CD4-positive, alpha-beta memory T cell (primary cell): ENCODE measurements at regions of chr13 and their contacts with region 1.

Region 1: GRCh38 chr13:55543053-55543452 is 1597.7 kb upstream of the PRR20A start:
- DNase-seq: no peak
- H3K4me3 ChIP-seq: no peak overlapping the region
- H3K4me3 Mint-ChIP-seq: no peak overlapping the region
- H3K27ac ChIP-seq: no peak overlapping the region
- H3K27ac Mint-ChIP-seq: no peak overlapping the region
- H3K4me1 ChIP-seq: no peaks in the 10 kb centered on the region
- H3K4me1 Mint-ChIP-seq: no peaks in the 10 kb centered on the region
- H3K27me3 ChIP-seq: no peaks in the 10 kb centered on the region
- H3K27me3 Mint-ChIP-seq: no peaks in the 10 kb centered on the region

Region 2: DNA sequence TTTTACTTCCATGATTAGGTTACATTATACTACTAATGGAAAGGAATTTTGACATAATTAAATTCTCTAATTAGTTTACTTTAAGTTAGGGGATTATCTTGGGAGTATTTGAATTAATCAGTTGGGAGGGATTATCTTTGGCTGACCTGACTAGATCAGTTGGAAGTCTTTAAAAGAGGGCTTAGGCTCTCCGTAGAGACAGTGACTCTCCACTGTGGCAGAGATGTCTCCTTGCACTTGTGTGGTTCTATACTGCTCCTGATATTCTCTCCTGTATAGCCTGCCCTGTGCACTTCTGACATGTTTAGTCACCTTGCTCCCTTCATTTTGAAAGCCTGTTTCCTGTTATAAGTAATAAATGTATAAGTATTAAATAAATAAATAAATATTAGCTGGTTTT is 14.6 kb before region 1 on chr13:
- CTCF ChIA-PET with region 1: no interaction called
- POLR2A ChIA-PET with region 1: no interaction called
- intact Hi-C with region 1: no loop called
- DNase-seq: no peak
- H3K4me3 ChIP-seq: no peak overlapping the region
- H3K4me3 Mint-ChIP-seq: no peak overlapping the region
- H3K27ac ChIP-seq: no peak overlapping the region
- H3K27ac Mint-ChIP-seq: no peak overlapping the region
- H3K4me1 ChIP-seq: no peaks in the 10 kb centered on the region
- H3K4me1 Mint-ChIP-seq: no peaks in the 10 kb centered on the region
- H3K27me3 ChIP-seq: no peaks in the 10 kb centered on the region
- H3K27me3 Mint-ChIP-seq: no peaks in the 10 kb centered on the region

Region 3: DNA sequence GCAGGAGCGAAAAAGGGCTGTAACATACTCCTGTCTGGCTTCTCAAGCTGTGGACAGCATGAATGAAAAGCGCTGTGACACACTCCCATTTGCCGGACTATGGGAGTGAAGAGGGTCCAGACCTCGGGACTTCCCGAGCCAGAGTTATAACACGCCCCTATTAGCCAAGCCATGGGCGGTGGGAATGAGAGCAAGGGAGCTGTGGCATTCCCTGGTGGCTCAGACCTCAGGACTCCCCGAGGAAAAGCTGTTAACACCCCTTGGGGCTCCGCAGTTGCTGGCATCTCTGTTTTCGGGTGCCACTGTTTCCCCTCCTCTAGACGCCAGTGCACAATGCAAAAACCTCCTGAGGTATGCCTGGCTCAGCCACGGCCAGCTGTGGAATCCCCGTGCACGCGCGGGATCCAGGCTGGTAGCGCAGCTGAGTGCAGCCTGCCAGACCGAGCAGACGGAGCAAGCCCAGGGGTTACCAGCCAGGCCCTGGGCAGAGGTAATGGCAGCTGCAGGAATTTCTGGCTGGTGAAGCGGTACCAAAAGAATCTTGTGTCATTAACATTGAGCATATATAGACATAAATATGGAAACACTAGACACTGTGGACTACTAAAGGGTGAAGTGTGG is 63.1 kb after region 1 on chr13:
- CTCF ChIA-PET with region 1: no interaction called
- POLR2A ChIA-PET with region 1: no interaction called
- intact Hi-C with region 1: loop called (anchors 10 kb)
- DNase-seq: no peak
- H3K4me3 ChIP-seq: no peak overlapping the region
- H3K4me3 Mint-ChIP-seq: no peak overlapping the region
- H3K27ac ChIP-seq: no peak overlapping the region
- H3K27ac Mint-ChIP-seq: no peak overlapping the region
- H3K4me1 ChIP-seq: no peaks in the 10 kb centered on the region
- H3K4me1 Mint-ChIP-seq: no peaks in the 10 kb centered on the region
- H3K27me3 ChIP-seq: no peaks in the 10 kb centered on the region
- H3K27me3 Mint-ChIP-seq: no peaks in the 10 kb centered on the region

Region 4: GRCh38 chr13:56459286-56459685 is 916.2 kb after region 1 on chr13:
- CTCF ChIA-PET with region 1: no interaction called
- POLR2A ChIA-PET with region 1: no interaction called
- intact Hi-C with region 1: no loop called
- DNase-seq: no peak
- H3K4me3 ChIP-seq: no peak overlapping the region
- H3K4me3 Mint-ChIP-seq: no peak overlapping the region
- H3K27ac ChIP-seq: no peak overlapping the region
- H3K27ac Mint-ChIP-seq: no peak overlapping the region
- H3K4me1 ChIP-seq: no peaks in the 10 kb centered on the region
- H3K4me1 Mint-ChIP-seq: no peaks in the 10 kb centered on the region
- H3K27me3 ChIP-seq: no peaks in the 10 kb centered on the region
- H3K27me3 Mint-ChIP-seq: no peaks in the 10 kb centered on the region